ENCODE measurements at regions of chr1 and their contacts with region 1.

Region 1: DNA sequence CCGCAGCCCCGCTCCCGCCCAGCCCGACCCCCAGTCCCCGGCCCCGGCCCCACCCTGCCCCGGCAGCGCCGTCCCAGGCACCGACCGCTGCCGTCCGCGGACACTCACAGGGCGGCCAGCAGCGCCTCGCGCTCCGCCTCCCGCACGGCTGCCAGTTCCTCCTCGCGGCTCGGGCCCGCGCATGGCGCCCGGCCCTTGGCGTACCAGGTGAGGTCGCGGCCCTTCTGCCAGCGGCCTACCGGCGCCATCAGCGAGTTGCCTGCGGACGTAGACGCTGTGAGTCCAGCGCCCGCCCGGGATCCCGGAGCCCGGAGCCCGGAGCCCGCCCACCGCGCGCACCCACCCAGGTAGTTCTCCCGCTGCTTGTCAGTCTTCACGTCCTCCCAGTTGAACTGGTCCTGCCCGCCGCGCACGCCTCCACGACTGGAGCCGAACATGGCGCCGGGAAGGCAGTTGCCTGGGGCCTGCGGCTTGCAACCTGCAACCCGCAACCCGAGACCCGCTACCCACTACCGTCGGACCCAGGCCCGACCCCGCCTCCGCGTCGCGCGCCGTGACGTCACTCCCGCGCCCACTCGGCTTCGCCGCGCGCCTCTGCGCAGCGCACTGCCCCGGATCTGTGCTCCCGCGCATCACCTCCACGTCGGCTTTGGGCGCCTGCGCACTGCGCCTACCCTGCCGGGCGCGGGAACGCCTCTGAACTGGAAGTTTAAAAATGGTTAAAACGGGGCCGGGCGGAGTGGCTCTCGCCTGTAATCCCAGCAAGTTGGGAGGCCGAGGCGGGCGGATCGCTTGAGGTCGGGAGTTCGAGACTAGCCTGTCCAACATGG is at the start of gene C1orf35:
- DNase-seq: peak; percentile 81 to 96 (median 94)
- ATAC-seq: peak; percentile 85
- H3K4me3 ChIP-seq: peak within 1 kb of the TSS; percentile 72 to 77
- H3K4me3 Mint-ChIP-seq: peak within 1 kb of the TSS; percentile 95
- H3K27ac ChIP-seq: peak within 1 kb of the TSS; percentile 80 to 91
- H3K27ac Mint-ChIP-seq: peak within 1 kb of the TSS; percentile 95
- H3K4me1 ChIP-seq: peaks cover 21% of the 10 kb centered on the region
- H3K4me1 Mint-ChIP-seq: peaks cover 25% of the 10 kb centered on the region
- H3K27me3 ChIP-seq: no peaks in the 10 kb centered on the region
- H3K27me3 Mint-ChIP-seq: no peaks in the 10 kb centered on the region
- CTCF ChIP-seq: no peak
- total RNA-seq, gene C1orf35: 28.4 to 30.2 TPM

Region 2: GRCh38 chr1:227999056-227999930 is 103.7 kb before region 1 on chr1:
- CTCF ChIA-PET with region 1: no interaction called
- POLR2A ChIA-PET with region 1: no interaction called
- intact Hi-C with region 1: loop called in 1 of 2 experiments (anchors 1 kb)
- DNase-seq: peak; percentile 47 to 78 (median 68)
- ATAC-seq: peak; percentile 97
- H3K4me3 ChIP-seq: no peak overlapping the region
- H3K4me3 Mint-ChIP-seq: no peak overlapping the region
- H3K27ac ChIP-seq: no peak overlapping the region
- H3K27ac Mint-ChIP-seq: no peak overlapping the region
- H3K4me1 ChIP-seq: no peaks in the 10 kb centered on the region
- H3K4me1 Mint-ChIP-seq: no peaks in the 10 kb centered on the region
- H3K27me3 ChIP-seq: peaks cover 2 to 8% of the 10 kb centered on the region in 2 experiments
- H3K27me3 Mint-ChIP-seq: peaks cover 22% of the 10 kb centered on the region
- CTCF ChIP-seq: peak; percentile 77

Measured in CD8-positive, alpha-beta T cell (primary cell).